Heart left ventricle (tissue), 16 donors: ENCODE measurements at regions of chr17 and their contacts with region 1.

Region 1: DNA sequence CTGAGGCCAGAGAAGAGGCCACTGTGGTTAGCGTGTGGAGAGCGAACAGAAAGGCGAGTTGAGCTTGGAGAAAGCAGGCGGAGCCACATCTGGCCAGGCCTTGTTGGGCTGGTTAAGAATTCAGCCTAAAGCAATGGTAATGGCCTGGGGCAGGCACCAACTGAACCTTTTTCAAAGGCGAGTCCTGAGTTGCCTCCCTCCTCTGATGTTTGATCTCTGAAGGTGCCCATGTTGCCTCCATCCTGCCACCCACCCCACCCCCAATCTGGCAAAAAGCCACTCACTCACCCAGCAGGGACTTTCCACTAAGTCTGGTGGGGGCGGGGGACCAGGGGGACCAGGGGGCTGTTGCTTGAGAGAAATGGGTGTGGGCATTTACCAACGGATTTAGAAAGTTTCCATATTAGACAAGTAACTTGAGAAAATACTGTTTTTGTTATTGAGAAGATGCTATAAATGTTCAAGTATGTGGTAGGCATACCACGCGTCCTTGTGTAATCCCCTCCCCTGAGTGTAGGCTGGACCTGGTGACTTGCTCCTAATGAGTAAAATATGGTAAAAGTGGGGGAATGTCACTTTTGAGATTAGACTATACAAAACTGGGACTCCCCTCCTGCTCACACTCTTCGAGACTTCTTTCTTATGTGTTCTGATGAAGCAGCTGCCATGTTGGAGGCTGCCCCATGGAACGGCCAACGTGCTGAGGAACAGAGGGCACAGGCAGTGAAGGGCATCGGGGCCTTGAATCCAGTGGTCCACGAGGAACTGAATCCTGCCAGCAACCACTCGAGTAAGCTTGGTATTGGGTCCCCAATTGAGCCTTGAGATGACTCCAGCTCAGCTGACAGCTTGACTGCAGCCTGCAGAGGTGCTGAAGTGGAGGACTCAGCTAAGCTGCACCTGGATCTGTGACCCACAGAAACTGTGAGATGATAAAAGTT is 29.9 kb upstream of the TNS4 start:
- DNase-seq: peak in 1 of 5 donors; percentile 19
- ATAC-seq: no peak
- H3K4me3 ChIP-seq: no peak overlapping the region
- H3K27ac ChIP-seq: peak overlapping the region in 6 of 12 donors; percentile 22 to 84 (median 75)
- H3K4me1 ChIP-seq: peaks cover 0 to 48% (median 26%) of the 10 kb centered on the region in 12 donors
- H3K27me3 ChIP-seq: no peaks in the 10 kb centered on the region
- CTCF ChIP-seq: no peak
- POLR2A ChIP-seq: no peak

Region 2: GRCh38 chr17:39996800-39997199 is 534.5 kb before region 1 on chr17:
- intact Hi-C with region 1: no loop called
- DNase-seq: peak in 1 of 5 donors; percentile 54
- ATAC-seq: peak in 3 of 4 donors; percentile 40 to 73 (median 58)
- H3K4me3 ChIP-seq: no peak overlapping the region
- H3K27ac ChIP-seq: peak overlapping the region in 1 of 12 donors; percentile 17
- H3K4me1 ChIP-seq: peaks cover 0 to 11% (median 0%) of the 10 kb centered on the region in 12 donors
- H3K27me3 ChIP-seq: no peaks in the 10 kb centered on the region
- CTCF ChIP-seq: no peak
- POLR2A ChIP-seq: no peak

Region 3: DNA sequence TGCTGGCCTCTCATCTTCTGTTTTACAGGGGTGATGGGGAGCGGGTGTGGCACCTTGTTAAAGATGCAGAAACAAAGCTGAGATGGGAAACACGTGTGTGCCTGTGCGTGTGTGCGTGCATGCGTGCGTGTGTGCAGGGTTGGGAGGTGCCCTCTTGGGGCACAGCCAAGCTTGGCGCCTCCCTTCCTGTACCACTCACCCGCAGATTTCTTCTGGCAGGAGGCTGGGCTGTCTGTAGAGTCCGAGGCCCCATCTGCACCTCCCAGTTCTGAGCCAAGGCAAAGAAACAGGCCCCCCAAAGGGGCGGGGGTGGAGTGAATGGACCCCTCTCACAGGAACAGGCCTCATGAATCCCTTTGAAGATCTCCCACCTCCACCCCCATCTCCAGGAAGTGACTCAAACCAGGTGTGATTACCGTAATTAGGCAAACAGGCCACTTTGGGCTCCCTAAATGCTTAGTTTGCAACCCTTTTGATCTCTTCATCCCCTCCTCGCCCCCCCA is 50.8 kb before region 1 on chr17:
- intact Hi-C with region 1: loop called in 5 of 10 experiments (anchors 2 to 5 kb)
- DNase-seq: peak in 1 of 5 donors; percentile 51
- ATAC-seq: peak in 3 of 4 donors; percentile 20 to 60 (median 30)
- H3K4me3 ChIP-seq: no peak overlapping the region
- H3K27ac ChIP-seq: peak overlapping the region in 1 of 12 donors; percentile 86
- H3K4me1 ChIP-seq: peaks cover 0 to 31% (median 5%) of the 10 kb centered on the region in 12 donors
- H3K27me3 ChIP-seq: no peaks in the 10 kb centered on the region
- CTCF ChIP-seq: no peak
- POLR2A ChIP-seq: no peak

Region 4: GRCh38 chr17:40485851-40486512 is 45.3 kb before region 1 on chr17:
- intact Hi-C with region 1: loop called in 2 of 10 experiments (anchors 5 kb)
- DNase-seq: peak in 2 of 5 donors; percentile 45 to 61
- ATAC-seq: peak; percentile 25 to 84 (median 72)
- H3K4me3 ChIP-seq: no peak overlapping the region
- H3K27ac ChIP-seq: peak overlapping the region in 7 of 12 donors; percentile 13 to 82 (median 43)
- H3K4me1 ChIP-seq: peaks cover 0 to 35% (median 0%) of the 10 kb centered on the region in 12 donors
- H3K27me3 ChIP-seq: no peaks in the 10 kb centered on the region
- CTCF ChIP-seq: no peak
- POLR2A ChIP-seq: peak in 1 of 2 donors; percentile 16